ENCODE measurements at regions of chr1 and their contacts with region 1.

Region 1: DNA sequence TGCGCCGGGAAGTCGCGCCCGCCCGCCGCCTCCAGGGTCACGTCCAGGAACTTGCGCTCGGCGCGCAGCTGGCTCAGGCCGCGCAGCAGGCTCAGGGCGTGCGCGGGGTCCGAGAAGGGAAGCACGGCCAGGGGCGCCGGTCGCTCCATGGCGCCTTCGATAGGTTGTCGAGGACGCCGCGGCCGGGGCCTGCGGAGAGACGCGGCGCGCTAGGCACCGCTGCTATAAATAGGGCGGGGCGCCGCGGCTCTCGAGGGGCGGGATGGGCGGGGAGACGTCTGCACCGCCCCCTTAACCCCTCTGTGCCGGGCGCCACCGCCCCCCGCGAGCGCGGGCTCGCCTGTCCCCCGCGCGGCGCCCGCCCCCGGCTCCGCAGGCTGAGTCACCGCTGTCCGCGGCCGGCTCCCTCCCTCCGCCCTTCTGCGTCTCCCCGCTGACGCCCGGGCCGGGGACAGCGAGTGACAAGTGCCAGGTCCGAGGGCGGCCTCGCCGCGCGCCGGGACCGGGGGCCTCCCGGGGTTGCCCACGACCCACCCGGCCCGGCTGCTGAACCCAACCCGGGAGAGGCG is at the start of gene KLHL21:
- DNase-seq: peak; percentile 95
- total RNA-seq, gene KLHL21: 33.1 TPM

Region 2: GRCh38 chr1:6613361-6614018 is 10.7 kb after region 1 on chr1 and contains the start of gene PHF13:
- intact Hi-C with region 1: loop called (anchors 1 kb)
- DNase-seq: peak; percentile 100
- total RNA-seq, gene PHF13: 9.3 TPM

Measured in cardiac septum (tissue), 1 donor.